Right cardiac atrium (tissue), 5 donors: ENCODE measurements at regions of chr9 and their contacts with region 1.

Region 1: GRCh38 chr9:111412280-111412679 is 71.9 kb downstream of the ECPAS start:
- DNase-seq: no peak
- ATAC-seq: no peak
- H3K4me3 ChIP-seq: no peak overlapping the region
- H3K27ac ChIP-seq: no peak overlapping the region
- H3K4me1 ChIP-seq: no peaks in the 10 kb centered on the region
- H3K27me3 ChIP-seq: no peaks in the 10 kb centered on the region

Region 2: GRCh38 chr9:111362526-111362925 is 49.8 kb before region 1 on chr9:
- intact Hi-C with region 1: loop called in 1 of 4 experiments (anchors 10 kb)
- DNase-seq: no peak
- ATAC-seq: no peak
- H3K4me3 ChIP-seq: no peak overlapping the region
- H3K27ac ChIP-seq: no peak overlapping the region
- H3K4me1 ChIP-seq: no peaks in the 10 kb centered on the region
- H3K27me3 ChIP-seq: no peaks in the 10 kb centered on the region

Region 3: DNA sequence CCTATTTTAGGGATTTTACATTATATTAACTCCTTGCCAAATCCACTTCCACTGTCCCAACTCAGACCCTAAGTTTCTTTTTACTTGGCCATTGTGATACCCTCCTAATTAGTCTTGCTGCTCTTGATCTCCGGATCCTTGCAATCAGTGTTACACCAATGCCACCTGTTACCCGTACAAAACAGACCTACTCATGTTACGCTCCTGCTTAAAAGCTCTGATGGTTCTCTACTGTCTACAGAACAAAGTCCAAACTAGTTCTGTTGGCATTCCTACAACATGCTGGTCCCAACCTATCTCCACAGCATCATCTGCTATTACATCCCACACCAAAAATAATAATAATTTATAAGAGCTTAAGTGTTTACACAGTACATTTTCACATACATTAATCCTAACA is 62.1 kb after region 1 on chr9:
- intact Hi-C with region 1: loop called in 1 of 4 experiments (anchors 10 kb)
- DNase-seq: no peak
- ATAC-seq: no peak
- H3K4me3 ChIP-seq: no peak overlapping the region
- H3K27ac ChIP-seq: no peak overlapping the region
- H3K4me1 ChIP-seq: peaks cover 9% of the 10 kb centered on the region
- H3K27me3 ChIP-seq: no peaks in the 10 kb centered on the region